Transverse colon (tissue), 4 donors: ENCODE measurements at regions of chr17 and their contacts with region 1.

Region 1: DNA sequence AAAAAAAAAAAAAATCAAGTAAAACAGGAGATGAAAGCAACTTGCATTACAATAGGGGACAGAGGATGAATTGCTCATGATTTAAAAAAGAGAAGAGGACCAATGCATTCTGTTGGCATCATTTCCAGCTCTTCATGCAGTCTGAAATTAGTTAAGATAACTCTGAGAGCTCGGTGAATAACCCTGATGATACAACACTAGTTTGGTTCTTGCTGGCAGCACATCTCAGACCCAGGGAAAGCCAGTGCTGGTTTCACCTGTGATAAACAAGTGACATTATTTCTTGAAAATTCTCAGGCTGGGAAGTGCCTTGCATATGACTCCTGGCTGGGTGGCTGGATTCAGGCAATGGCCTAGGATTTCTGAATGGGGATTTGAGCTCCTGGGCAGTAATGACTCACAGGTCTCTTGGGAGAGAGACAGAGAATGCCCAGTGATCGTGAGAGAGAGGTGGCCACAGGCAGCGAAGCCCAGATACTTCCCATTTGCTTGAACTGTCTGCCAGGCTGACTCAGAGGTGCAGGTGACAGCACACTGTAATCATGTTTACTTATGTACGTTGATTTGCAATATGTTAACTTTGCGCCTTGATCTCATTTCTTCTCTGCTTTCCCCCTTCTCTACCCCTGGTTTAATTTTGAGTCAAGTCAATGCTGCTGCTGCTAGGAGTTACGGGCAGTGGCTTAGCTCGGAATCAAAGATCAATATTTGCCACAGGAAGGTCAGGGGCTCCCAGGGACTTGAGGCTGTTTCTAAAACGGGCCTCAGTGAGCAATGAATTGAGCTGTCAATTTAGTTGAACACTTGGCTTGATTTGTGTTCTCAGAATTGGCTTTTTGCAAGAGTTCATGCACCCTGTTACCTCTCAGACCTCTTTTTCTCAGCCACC is 27.1 kb downstream of the ARSG start:
- DNase-seq: no peak
- H3K4me3 ChIP-seq: no peak overlapping the region
- H3K27ac ChIP-seq: no peak overlapping the region
- H3K4me1 ChIP-seq: peaks cover 0 to 4% (median 0%) of the 10 kb centered on the region in 4 donors
- H3K27me3 ChIP-seq: no peaks in the 10 kb centered on the region
- CTCF ChIP-seq: no peak
- EP300 ChIP-seq: no peak
- POLR2A ChIP-seq: no peak

Region 2: GRCh38 chr17:68584581-68585303 is 266.4 kb after region 1 on chr17:
- in situ Hi-C with region 1: no loop called
- intact Hi-C with region 1: no loop called
- DNase-seq: no peak
- H3K4me3 ChIP-seq: no peak overlapping the region
- H3K27ac ChIP-seq: no peak overlapping the region
- H3K4me1 ChIP-seq: no peaks in the 10 kb centered on the region
- H3K27me3 ChIP-seq: no peaks in the 10 kb centered on the region
- CTCF ChIP-seq: no peak
- EP300 ChIP-seq: no peak
- POLR2A ChIP-seq: no peak

Region 3: GRCh38 chr17:68697850-68698361 is 379.6 kb after region 1 on chr17:
- in situ Hi-C with region 1: no loop called
- intact Hi-C with region 1: loop called (anchors 2 kb)
- DNase-seq: peak; percentile 16
- H3K4me3 ChIP-seq: no peak overlapping the region
- H3K27ac ChIP-seq: peak overlapping the region; percentile 10 to 36 (median 24)
- H3K4me1 ChIP-seq: no peaks in the 10 kb centered on the region
- H3K27me3 ChIP-seq: no peaks in the 10 kb centered on the region
- CTCF ChIP-seq: no peak
- EP300 ChIP-seq: no peak
- POLR2A ChIP-seq: no peak